CD4-positive, alpha-beta memory T cell (primary cell): ENCODE measurements at regions of chr15 and their contacts with region 1.

Region 1: GRCh38 chr15:60787837-60788691 is 309.1 kb upstream of the ICE2 start:
- DNase-seq: peak; percentile 43 to 64 (median 51)
- H3K4me3 ChIP-seq: peak overlapping the region in 1 of 2 donors; percentile 17
- H3K4me3 Mint-ChIP-seq: peak overlapping the region; percentile 56 to 78 (median 64)
- H3K27ac ChIP-seq: peak overlapping the region; percentile 53
- H3K27ac Mint-ChIP-seq: peak overlapping the region; percentile 72 to 97 (median 95)
- H3K4me1 ChIP-seq: peaks cover 42% of the 10 kb centered on the region
- H3K4me1 Mint-ChIP-seq: peaks cover 30 to 50% (median 38%) of the 10 kb centered on the region in 4 donors
- H3K27me3 ChIP-seq: no peaks in the 10 kb centered on the region
- H3K27me3 Mint-ChIP-seq: no peaks in the 10 kb centered on the region

Region 2: GRCh38 chr15:60649845-60650548 is 138.1 kb before region 1 on chr15:
- CTCF ChIA-PET with region 1: interaction called, 10 read pairs
- POLR2A ChIA-PET with region 1: interaction called, 6 read pairs
- intact Hi-C with region 1: no loop called
- DNase-seq: peak; percentile 73 to 85 (median 81)
- H3K4me3 ChIP-seq: peak overlapping the region in 1 of 2 donors; percentile 46
- H3K4me3 Mint-ChIP-seq: peak overlapping the region; percentile 67 to 92 (median 85)
- H3K27ac ChIP-seq: peak overlapping the region; percentile 66
- H3K27ac Mint-ChIP-seq: peak overlapping the region; percentile 93 to 99 (median 97)
- H3K4me1 ChIP-seq: peaks cover 46% of the 10 kb centered on the region
- H3K4me1 Mint-ChIP-seq: peaks cover 36 to 55% (median 47%) of the 10 kb centered on the region in 4 donors
- H3K27me3 ChIP-seq: no peaks in the 10 kb centered on the region
- H3K27me3 Mint-ChIP-seq: no peaks in the 10 kb centered on the region

Region 3: GRCh38 chr15:60720493-60721256 is 67.4 kb before region 1 on chr15:
- CTCF ChIA-PET with region 1: interaction called, 31 read pairs
- POLR2A ChIA-PET with region 1: interaction called, 40 read pairs
- intact Hi-C with region 1: loop called (anchors 5 kb)
- DNase-seq: peak; percentile 59 to 77 (median 64)
- H3K4me3 ChIP-seq: peak overlapping the region; percentile 13 to 42
- H3K4me3 Mint-ChIP-seq: peak overlapping the region; percentile 71 to 88 (median 78)
- H3K27ac ChIP-seq: peak overlapping the region; percentile 72
- H3K27ac Mint-ChIP-seq: peak overlapping the region; percentile 83 to 98 (median 94)
- H3K4me1 ChIP-seq: peaks cover 62% of the 10 kb centered on the region
- H3K4me1 Mint-ChIP-seq: peaks cover 51 to 76% (median 57%) of the 10 kb centered on the region in 4 donors
- H3K27me3 ChIP-seq: no peaks in the 10 kb centered on the region
- H3K27me3 Mint-ChIP-seq: no peaks in the 10 kb centered on the region

Region 4: GRCh38 chr15:60798821-60799220 is 10.8 kb after region 1 on chr15:
- CTCF ChIA-PET with region 1: interaction called, 45 read pairs
- POLR2A ChIA-PET with region 1: interaction called, 48 read pairs
- intact Hi-C with region 1: no loop called
- DNase-seq: peak in 1 of 5 donors; percentile 57
- H3K4me3 ChIP-seq: no peak overlapping the region
- H3K4me3 Mint-ChIP-seq: peak overlapping the region in 5 of 8 donors; percentile 25 to 55 (median 48)
- H3K27ac ChIP-seq: peak overlapping the region; percentile 56
- H3K27ac Mint-ChIP-seq: peak overlapping the region; percentile 87 to 98 (median 93)
- H3K4me1 ChIP-seq: peaks cover 95% of the 10 kb centered on the region
- H3K4me1 Mint-ChIP-seq: peaks cover 67 to 97% (median 85%) of the 10 kb centered on the region in 4 donors
- H3K27me3 ChIP-seq: no peaks in the 10 kb centered on the region
- H3K27me3 Mint-ChIP-seq: no peaks in the 10 kb centered on the region

Region 5: DNA sequence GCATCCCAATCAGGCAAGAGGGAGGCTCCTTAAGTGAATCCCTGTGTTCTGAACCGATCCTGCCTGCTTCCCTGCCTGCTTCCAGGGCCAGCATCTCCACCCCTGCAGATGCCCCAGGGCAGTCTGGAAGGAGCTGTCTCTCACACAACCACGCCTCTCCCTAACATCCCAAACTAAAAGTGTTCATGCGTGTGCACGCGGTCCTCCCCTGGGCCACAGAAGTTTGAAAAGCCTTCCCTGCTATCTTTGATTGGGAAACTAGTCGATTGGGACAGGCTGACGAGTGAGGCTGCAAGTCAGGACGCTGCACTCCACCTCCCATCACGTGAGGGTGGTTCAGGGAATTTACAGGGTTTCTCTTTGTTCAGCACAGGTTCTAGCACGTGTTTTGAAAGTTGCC is 31.8 kb after region 1 on chr15:
- CTCF ChIA-PET with region 1: interaction called, 3 read pairs
- POLR2A ChIA-PET with region 1: interaction called, 15 read pairs
- intact Hi-C with region 1: no loop called
- DNase-seq: peak in 2 of 5 donors; percentile 30 to 45
- H3K4me3 ChIP-seq: no peak overlapping the region
- H3K4me3 Mint-ChIP-seq: peak overlapping the region; percentile 58 to 85 (median 77)
- H3K27ac ChIP-seq: peak overlapping the region; percentile 41
- H3K27ac Mint-ChIP-seq: peak overlapping the region; percentile 83 to 98 (median 96)
- H3K4me1 ChIP-seq: peaks cover 59% of the 10 kb centered on the region
- H3K4me1 Mint-ChIP-seq: peaks cover 41 to 71% (median 54%) of the 10 kb centered on the region in 4 donors
- H3K27me3 ChIP-seq: no peaks in the 10 kb centered on the region
- H3K27me3 Mint-ChIP-seq: no peaks in the 10 kb centered on the region

Region 6: DNA sequence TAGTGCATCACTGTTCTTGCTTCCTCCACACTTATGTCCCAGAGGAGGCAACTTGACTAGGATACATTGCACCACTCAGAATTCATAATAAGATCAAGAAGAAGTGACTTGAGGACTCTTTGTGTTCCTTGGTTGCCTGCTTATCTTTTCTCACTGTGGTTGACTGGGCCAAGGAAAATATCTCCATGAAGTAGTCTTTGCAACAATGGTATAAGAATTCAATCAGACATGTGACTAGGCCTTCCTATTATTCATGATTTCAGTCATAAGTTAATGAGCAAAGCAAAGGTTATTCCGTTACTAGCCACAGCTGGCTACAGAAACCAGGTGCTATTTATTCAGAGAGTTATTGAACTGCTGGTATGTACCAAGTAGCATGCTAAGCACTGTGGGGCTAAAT is 81.8 kb after region 1 on chr15:
- CTCF ChIA-PET with region 1: no interaction called
- POLR2A ChIA-PET with region 1: no interaction called
- intact Hi-C with region 1: no loop called
- DNase-seq: no peak
- H3K4me3 ChIP-seq: no peak overlapping the region
- H3K4me3 Mint-ChIP-seq: no peak overlapping the region
- H3K27ac ChIP-seq: no peak overlapping the region
- H3K27ac Mint-ChIP-seq: no peak overlapping the region
- H3K4me1 ChIP-seq: no peaks in the 10 kb centered on the region
- H3K4me1 Mint-ChIP-seq: no peaks in the 10 kb centered on the region
- H3K27me3 ChIP-seq: no peaks in the 10 kb centered on the region
- H3K27me3 Mint-ChIP-seq: peaks cover 2 to 4% of the 10 kb centered on the region in 2 donors

Region 7: DNA sequence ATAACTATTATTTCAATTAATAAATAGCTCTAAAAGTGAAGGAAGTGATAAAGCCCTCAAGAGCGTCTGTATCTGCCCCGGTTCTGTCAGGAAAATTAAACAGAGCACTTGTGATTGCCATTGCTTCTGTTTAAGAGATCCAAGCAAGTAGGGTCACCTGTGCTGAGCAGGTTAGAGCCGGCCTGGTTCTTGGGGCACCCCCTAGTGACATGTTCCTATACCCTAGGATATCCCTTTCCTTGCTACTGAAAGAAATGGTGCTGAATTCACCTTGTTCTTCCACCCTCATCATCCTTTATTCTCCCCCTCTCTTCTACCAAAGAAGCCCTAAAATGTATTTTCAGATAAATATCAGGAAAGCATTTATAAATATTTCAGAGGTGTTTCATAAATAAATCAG is 117.5 kb after region 1 on chr15:
- CTCF ChIA-PET with region 1: interaction called, 13 read pairs
- POLR2A ChIA-PET with region 1: no interaction called
- intact Hi-C with region 1: no loop called
- DNase-seq: peak; percentile 36 to 50 (median 43)
- H3K4me3 ChIP-seq: no peak overlapping the region
- H3K4me3 Mint-ChIP-seq: no peak overlapping the region
- H3K27ac ChIP-seq: no peak overlapping the region
- H3K27ac Mint-ChIP-seq: peak overlapping the region in 1 of 7 donors; percentile 32
- H3K4me1 ChIP-seq: no peaks in the 10 kb centered on the region
- H3K4me1 Mint-ChIP-seq: peaks cover 3 to 20% (median 5%) of the 10 kb centered on the region in 4 donors
- H3K27me3 ChIP-seq: no peaks in the 10 kb centered on the region
- H3K27me3 Mint-ChIP-seq: no peaks in the 10 kb centered on the region